Thyroid gland (tissue), 4 donors: ENCODE measurements at regions of chr12 and their contacts with region 1.

Region 1: DNA sequence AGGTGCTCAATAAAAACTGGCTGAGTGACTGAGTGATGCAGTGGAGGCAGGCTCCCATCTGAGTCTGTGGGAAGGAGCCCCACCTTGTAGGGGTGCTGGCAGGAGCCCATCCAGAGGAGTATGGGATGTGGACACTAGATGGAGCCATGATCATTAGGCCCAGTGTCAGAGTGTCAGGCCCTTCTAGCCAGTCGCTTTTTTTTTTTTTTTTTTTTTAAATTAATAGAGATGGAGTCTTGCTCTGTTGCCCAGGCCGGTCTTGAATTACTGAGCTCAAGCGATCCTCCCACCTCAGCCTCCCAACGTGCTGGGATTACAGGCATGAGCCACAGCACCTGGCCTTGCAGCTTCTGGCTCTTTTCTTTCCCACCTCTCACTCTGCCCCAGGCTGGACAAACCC is 11.5 kb downstream of the RITA1 start:
- DNase-seq: peak; percentile 74 to 77
- H3K4me3 ChIP-seq: no peak overlapping the region
- H3K27ac ChIP-seq: no peak overlapping the region
- H3K4me1 ChIP-seq: peaks cover 0 to 13% of the 10 kb centered on the region in 2 donors
- H3K27me3 ChIP-seq: no peaks in the 10 kb centered on the region
- CTCF ChIP-seq: peak in 5 of 6 experiments; percentile 41 to 73 (median 61)
- POLR2A ChIP-seq: no peak

Region 2: DNA sequence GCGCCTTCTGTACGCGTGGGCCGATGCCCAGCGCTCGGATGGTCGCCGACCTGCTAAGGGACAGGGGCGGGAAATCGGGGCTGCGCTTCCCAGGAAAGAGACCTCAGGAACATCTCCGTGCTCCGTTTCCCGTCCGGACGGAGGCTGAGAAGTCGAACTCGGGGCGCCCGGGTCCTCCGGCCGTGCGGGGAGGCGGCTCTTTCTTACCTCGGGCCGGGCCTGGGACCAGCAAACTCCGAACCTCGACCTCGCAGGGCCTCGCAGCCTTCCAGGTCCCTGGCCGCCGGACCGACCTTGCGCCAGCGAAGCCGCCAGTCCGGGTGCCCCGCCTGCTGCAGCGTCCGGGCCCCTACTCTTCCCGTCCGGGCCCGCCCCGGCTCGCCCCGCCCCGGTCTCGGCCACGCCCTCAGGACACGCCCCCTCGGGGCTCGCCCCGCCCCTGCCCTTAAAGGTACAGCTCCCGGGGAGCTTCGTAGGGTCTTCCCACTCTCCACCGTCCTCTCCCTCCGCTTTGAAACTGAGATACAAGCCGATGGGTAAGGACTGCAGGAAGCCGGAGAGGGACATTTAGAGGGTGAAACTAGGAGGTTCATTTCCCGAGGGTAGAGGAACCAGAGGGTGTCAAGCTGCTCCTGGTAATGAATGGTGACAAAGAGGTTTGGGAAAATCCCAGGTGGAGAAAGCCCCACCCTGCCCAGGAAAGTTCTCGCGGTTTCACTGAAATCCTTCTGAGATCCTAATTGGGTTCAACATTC is 138.0 kb after region 1 on chr12 and contains the start of gene SLC8B1:
- intact Hi-C with region 1: loop called (anchors 10 kb)
- DNase-seq: peak; percentile 83 to 86
- H3K4me3 ChIP-seq: peak within 1 kb of the TSS; percentile 38 to 65 (median 44)
- H3K27ac ChIP-seq: peak within 1 kb of the TSS in 2 of 3 donors; percentile 45 to 63
- H3K4me1 ChIP-seq: peaks cover 4 to 24% of the 10 kb centered on the region in 2 donors
- H3K27me3 ChIP-seq: no peaks in the 10 kb centered on the region
- CTCF ChIP-seq: no peak
- POLR2A ChIP-seq: peak; percentile 15 to 83
- total RNA-seq, gene SLC8B1: 23.3 to 50.5 (median 30.7) TPM

Region 3: GRCh38 chr12:113422030-113422885 is 225.3 kb after region 1 on chr12 and contains the start of gene SDSL:
- intact Hi-C with region 1: loop called (anchors 10 kb)
- DNase-seq: peak; percentile 80 to 84
- H3K4me3 ChIP-seq: peak within 1 kb of the TSS; percentile 34 to 52 (median 41)
- H3K27ac ChIP-seq: peak within 1 kb of the TSS; percentile 63 to 92 (median 77)
- H3K4me1 ChIP-seq: peaks cover 17 to 30% of the 10 kb centered on the region in 2 donors
- H3K27me3 ChIP-seq: no peaks in the 10 kb centered on the region
- CTCF ChIP-seq: no peak
- POLR2A ChIP-seq: peak in 1 of 2 donors; percentile 73
- total RNA-seq, gene SDSL: 13.6 to 42.2 (median 27.5) TPM